ENCODE measurements at regions of chr19 and their contacts with region 1.

Region 1: DNA sequence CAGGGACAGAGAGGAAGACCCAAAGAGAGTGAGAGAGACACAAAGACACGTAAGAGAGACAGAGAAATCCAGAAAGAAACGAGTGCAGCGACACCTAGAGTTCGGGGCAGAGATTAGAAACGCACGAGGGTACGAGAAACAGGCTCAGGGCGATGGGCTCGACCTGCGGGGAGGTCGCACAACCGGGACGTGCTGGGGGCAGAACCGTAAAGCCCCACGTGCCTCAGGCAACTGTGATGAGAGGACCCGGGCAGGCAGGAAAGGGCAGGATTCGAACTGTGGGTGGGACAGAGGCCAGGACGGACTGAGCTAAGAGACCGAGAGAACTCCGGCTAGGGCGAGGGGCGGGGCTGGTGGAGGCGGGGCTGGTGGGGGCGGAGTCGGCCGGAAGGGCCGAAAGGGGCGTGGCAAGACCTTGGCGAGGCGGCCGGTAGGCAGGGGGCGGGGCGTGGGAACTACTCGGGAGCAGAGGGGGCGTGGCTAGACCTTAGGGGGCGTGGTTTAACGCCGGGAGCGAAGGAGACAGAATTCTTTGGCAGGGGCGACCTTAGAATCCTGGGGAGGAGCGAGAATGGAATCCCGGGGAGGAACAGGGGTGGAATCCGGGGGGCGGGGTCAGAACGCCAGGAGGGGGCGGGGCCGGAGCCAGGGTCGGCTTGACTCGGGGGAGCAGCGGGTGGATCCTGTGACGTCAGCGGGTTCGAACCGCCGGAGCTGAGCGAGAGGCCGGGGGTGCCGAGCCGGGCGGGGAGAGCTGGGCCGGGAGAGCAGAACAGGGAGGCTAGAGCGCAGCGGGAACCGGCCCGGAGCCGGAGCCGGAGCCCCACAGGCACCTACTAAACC is at the start of gene NECTIN2:
- DNase-seq: peak; percentile 100
- ATAC-seq: peak; percentile 84 to 85
- total RNA-seq, gene NECTIN2: 54.0 to 94.1 TPM

Region 2: DNA sequence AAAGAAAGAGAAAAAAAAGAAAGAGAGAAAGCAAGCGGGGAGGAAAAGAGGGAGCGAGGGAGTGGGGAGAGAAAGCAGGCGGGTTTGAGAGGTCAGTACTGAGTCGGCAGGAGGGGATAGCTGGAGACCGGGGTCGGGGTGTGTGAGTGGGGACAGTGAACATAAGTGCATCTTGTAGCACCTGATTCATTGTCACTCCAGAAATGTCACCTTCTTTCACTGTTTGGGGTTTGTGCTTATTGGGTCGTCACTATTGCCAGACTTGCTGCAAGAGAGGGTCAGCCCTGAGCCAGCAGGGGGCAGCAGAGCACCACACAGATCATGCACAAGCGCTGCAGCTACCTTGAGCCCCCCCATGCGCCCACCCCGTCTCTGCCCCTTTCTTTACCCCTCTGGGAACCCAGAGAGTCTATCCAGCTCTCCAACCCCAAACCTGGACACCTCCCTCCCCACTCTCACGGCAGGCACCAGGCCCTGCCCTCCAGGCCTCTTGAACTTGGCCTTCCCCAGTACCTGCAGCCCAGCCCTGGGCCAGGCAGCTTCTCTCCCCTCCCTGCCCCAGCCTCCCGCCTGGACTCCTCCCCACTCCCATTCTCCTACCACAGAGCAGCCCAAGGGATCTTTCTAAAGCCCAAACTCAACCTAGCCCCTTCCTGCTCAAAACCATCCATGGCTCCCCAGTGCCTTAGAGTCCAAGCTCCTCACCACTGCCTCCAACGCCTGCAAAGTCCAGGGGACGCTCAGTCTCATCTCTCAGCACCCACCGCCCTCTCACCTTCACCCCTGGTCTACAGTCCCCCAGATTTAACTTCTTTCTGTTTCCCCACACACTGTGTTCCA is 156.6 kb before region 1 on chr19:
- intact Hi-C with region 1: loop called in 1 of 2 experiments (anchors 5 kb)
- DNase-seq: peak; percentile 82
- ATAC-seq: peak; percentile 43 to 51

Region 3: GRCh38 chr19:44723952-44724319 is 121.9 kb before region 1 on chr19:
- intact Hi-C with region 1: loop called in 1 of 2 experiments (anchors 10 kb)
- DNase-seq: peak; percentile 86
- ATAC-seq: peak; percentile 92

Region 4: GRCh38 chr19:44782729-44783128 is 63.1 kb before region 1 on chr19:
- intact Hi-C with region 1: loop called in 1 of 2 experiments (anchors 1 kb)
- DNase-seq: no peak
- ATAC-seq: no peak

Region 5: GRCh38 chr19:44800461-44800860 is 45.4 kb before region 1 on chr19:
- intact Hi-C with region 1: loop called (anchors 2 to 5 kb)
- DNase-seq: peak; percentile 88
- ATAC-seq: peak; percentile 92 to 94

Region 6: DNA sequence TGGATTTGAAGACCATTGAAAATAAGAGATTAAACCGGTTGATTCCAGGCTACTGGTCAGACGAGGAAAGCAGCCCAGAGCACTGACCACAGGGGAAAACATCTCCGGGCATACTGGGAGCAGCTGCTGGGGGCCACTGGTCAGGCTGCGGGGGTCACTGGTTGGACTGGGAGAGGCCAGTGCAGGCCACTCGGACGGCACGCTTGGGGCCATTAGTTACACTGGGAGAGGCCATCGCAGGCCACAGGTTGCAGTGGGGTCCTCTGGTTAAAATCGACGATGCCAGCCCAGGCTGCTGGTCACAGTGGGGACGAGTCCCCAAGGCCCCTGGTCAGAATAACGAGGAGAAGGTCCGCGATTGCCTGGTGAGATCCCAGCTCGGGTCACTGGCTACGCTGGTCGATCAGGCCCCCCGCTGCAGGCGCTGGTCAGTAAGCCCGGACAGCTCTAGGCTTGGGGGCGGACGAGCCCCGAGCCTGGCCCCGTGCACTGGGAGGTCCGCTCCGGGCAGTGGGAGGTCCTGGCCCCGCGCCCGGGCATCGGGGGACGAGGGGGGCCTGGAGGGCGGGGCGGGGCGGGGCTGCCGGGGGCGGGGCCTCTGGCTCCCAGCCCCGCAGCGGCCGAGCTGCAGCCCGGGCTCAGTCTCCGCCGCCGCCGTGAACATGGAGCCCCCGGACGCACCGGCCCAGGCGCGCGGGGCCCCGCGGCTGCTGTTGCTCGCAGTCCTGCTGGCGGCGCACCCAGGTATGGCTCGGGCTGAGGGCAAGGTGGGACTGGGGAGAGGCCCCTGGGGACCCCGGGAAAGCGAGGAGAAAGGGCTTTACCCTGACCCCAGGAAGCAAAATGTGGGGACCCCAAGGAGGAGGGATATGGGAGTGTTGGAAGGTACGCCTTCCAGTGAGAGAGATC is 37.1 kb before region 1 on chr19 and contains the start of gene BCAM:
- intact Hi-C with region 1: loop called in 1 of 2 experiments (anchors 2 kb)
- DNase-seq: peak; percentile 86
- ATAC-seq: peak; percentile 95 to 97
- total RNA-seq, gene BCAM: 76.4 to 76.9 TPM

Region 7: DNA sequence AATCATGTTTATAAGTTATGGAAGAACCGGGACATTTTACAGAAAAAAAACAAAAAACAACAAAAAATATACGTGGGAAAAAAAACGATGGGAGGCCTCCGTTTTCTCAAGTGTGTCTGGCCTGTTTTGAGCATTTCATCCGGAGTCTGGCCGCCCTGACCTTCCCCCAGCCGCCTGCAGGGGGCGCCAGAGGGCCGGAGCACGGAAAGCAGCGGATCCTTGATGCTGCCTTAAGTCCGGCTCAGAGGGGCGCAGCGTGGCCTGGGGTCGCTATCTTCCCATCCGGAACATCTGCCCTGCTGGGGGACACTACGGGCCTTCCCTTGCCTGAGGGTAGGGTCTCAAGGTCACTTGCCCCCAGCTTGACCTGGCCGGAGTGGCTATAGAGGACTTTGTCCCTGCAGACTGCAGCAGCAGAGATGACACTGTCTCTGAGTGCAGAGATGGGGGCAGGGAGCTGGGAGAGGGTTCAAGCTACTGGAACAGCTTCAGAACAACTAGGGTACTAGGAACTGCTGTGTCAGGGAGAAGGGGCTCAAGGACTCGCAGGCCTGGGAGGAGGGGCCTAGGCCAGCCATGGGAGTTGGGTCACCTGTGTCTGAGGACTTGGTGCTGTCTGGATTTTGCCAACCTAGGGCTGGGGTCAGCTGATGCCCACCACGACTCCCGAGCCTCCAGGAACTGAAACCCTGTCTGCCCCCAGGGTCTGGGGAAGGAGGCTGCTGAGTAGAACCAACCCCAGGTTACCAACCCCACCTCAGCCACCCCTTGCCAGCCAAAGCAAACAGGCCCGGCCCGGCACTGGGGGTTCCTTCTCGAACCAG is 58.0 kb after region 1 on chr19:
- intact Hi-C with region 1: no loop called
- DNase-seq: peak; percentile 68
- ATAC-seq: peak; percentile 70 to 72